Activated CD8-positive, alpha-beta T cell treated with anti-CD3 and anti-CD28 coated beads for 36 hours (primary cell): ENCODE measurements at regions of chr14 and their contacts with region 1.

Region 1: DNA sequence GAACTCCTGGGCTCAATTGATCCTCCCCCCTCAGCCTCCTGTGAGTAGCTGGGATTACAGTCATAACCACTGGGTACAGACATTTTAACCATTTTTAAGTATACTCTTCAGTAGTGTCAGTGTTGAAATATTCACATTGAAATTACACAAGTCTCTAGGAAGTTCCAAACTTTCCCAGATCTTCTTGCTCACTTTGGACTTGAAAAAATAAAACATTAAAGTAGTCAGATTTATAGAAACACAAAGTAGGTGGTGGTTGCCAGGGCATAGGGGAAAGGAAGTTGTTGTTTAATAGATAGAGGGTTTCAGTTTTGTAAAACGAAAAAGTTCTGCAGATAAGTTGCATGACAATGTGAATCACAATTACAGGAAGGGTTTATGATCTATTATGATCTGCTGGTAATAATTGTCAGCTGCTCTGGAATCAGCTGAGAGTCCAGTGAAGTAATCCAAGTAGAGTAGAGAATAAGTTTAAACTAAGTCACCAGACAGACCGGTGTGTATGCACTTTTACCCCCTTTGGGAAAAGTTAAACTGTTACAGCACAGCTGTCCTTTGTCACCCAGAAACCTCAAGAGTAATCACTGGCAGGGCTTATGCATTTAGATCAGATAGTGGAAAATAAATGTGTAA is 27.4 kb downstream of the PCNX1 start:
- DNase-seq: peak; percentile 35
- ATAC-seq: peak; percentile 90
- H3K4me3 Mint-ChIP-seq: peak overlapping the region; percentile 53
- H3K27ac Mint-ChIP-seq: peak overlapping the region; percentile 90
- H3K4me1 Mint-ChIP-seq: peaks cover 71% of the 10 kb centered on the region
- H3K27me3 Mint-ChIP-seq: no peaks in the 10 kb centered on the region
- CTCF ChIP-seq: no peak

Region 2: DNA sequence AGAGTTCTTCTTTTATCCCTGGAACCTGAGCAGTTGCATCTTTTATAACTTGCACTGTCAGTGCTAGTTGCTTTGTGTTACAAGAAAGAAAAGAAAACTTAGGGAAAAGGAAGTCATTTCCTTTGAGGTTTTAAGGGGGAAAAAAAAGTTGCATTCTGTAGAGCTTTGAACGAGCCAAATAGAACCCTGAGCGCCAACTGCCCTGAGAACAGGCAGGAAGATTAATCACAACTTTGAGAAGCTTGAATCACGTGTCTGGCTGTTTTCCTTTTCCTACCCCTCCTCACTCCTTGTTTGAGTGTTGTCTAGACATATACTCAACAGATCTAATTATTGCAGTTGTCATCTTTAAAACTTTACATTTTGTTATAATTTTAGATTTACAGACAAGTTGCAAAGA is 14.8 kb before region 1 on chr14:
- CTCF ChIA-PET with region 1: interaction called, 12 read pairs
- POLR2A ChIA-PET with region 1: interaction called, 4 read pairs
- intact Hi-C with region 1: no loop called
- DNase-seq: peak; percentile 29
- ATAC-seq: no peak
- H3K4me3 Mint-ChIP-seq: peak overlapping the region; percentile 43
- H3K27ac Mint-ChIP-seq: peak overlapping the region; percentile 91
- H3K4me1 Mint-ChIP-seq: peaks cover 84% of the 10 kb centered on the region
- H3K27me3 Mint-ChIP-seq: no peaks in the 10 kb centered on the region
- CTCF ChIP-seq: no peak

Region 3: DNA sequence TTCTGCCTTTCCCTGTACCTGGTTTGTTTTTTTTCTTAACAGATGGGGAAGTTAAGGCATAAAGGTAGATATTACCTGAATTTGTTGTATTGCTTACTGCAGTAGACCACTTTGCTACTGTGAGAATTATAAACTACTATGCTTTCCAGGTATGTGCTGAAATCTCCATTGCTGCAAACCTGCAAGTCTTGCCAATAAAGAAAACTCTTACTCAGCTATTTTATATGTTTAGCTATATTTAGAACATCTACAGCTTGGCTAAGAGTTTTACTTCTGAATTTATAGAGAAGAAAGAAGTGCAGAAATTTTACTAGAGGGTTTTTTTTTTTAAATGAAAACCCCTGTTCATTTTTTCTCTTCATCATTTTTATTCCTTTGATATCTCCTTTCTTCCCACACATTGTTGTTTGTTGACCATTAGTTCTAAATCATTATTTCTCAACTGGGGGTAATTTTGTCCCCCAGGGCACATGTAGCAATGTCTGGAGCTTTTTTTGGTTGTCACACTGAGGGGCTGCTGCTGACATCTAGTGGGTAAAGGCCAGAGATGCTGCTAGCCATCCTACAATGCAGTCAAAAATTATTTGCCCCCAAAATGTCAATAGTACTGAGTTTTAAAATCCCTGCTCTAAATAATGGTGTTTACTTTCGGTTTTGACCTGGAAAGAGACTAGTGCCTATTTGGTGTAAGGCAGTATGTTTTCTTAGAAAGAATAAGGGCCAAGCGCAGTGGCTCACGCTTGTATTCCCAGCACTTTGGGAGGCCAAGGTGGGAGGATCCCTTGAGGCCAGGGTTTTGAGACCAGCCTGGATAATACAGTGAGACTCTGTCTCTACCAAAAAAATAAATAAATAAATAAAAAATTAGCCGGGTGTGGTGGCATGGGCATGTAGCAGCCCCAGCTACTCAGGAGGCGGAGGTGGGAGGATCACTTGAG is 21.2 kb after region 1 on chr14:
- CTCF ChIA-PET with region 1: interaction called, 29 read pairs
- POLR2A ChIA-PET with region 1: no interaction called
- intact Hi-C with region 1: no loop called
- DNase-seq: peak; percentile 58
- ATAC-seq: peak; percentile 80
- H3K4me3 Mint-ChIP-seq: no peak overlapping the region
- H3K27ac Mint-ChIP-seq: no peak overlapping the region
- H3K4me1 Mint-ChIP-seq: peaks cover 37% of the 10 kb centered on the region
- H3K27me3 Mint-ChIP-seq: no peaks in the 10 kb centered on the region
- CTCF ChIP-seq: peak; percentile 78

Region 4: GRCh38 chr14:71031000-71031399 is 96.4 kb after region 1 on chr14:
- CTCF ChIA-PET with region 1: no interaction called
- POLR2A ChIA-PET with region 1: no interaction called
- intact Hi-C with region 1: no loop called
- DNase-seq: no peak
- ATAC-seq: no peak
- H3K4me3 Mint-ChIP-seq: no peak overlapping the region
- H3K27ac Mint-ChIP-seq: no peak overlapping the region
- H3K4me1 Mint-ChIP-seq: peaks cover 3% of the 10 kb centered on the region
- H3K27me3 Mint-ChIP-seq: no peaks in the 10 kb centered on the region
- CTCF ChIP-seq: no peak